ENCODE measurements at regions of chr6 and their contacts with region 1.

Region 1: GRCh38 chr6:30672445-30673253 is at the start of gene DHX16:
- DNase-seq: peak; percentile 98
- H3K4me3 ChIP-seq: peak within 1 kb of the TSS; percentile 81 to 95 (median 94)
- H3K27ac ChIP-seq: peak within 1 kb of the TSS; percentile 80 to 93 (median 84)
- H3K4me1 ChIP-seq: peaks cover 16 to 32% (median 23%) of the 10 kb centered on the region in 4 donors
- H3K27me3 ChIP-seq: no peaks in the 10 kb centered on the region
- CTCF ChIP-seq: peak; percentile 86 to 96 (median 94)
- EP300 ChIP-seq: no peak
- POLR2A ChIP-seq: no peak
- total RNA-seq, gene DHX16: 20.3 to 41.1 (median 31.1) TPM

Region 2: DNA sequence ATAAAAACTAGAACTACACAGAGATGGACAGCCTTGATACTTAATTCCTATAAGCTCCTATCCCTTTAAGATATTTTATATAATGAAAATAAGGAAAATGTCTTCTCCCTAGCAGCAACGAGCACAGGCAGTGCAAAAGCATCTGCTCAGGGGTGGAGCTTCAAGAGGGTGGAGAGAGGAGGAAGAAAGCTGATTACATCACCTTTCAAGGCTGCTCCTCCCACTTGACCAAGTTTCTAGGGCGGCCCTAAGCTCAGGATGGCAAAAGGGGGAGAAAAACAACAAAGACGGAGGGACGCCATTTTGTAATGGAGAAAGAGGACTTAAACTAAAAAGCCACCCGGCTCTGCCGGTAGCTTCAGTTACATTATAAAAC is 57.8 kb before region 1 on chr6:
- intact Hi-C with region 1: no loop called
- DNase-seq: peak; percentile 95
- H3K4me3 ChIP-seq: peak overlapping the region; percentile 68 to 91 (median 76)
- H3K27ac ChIP-seq: peak overlapping the region; percentile 90 to 98 (median 96)
- H3K4me1 ChIP-seq: peaks cover 59 to 68% (median 64%) of the 10 kb centered on the region in 4 donors
- H3K27me3 ChIP-seq: no peaks in the 10 kb centered on the region
- CTCF ChIP-seq: peak in 1 of 3 experiments; percentile 11
- EP300 ChIP-seq: no peak
- POLR2A ChIP-seq: no peak

Region 3: GRCh38 chr6:30626484-30627366 is 45.9 kb before region 1 on chr6 and contains the start of gene ATAT1:
- intact Hi-C with region 1: loop called (anchors 2 kb)
- DNase-seq: peak; percentile 98
- H3K4me3 ChIP-seq: peak within 1 kb of the TSS; percentile 52 to 66 (median 58)
- H3K27ac ChIP-seq: peak within 1 kb of the TSS; percentile 91
- H3K4me1 ChIP-seq: peaks cover 11 to 19% (median 16%) of the 10 kb centered on the region in 4 donors
- H3K27me3 ChIP-seq: no peaks in the 10 kb centered on the region
- CTCF ChIP-seq: peak; percentile 38 to 66 (median 47)
- EP300 ChIP-seq: peak; percentile 70
- POLR2A ChIP-seq: no peak
- total RNA-seq, gene ATAT1: 2.7 to 8.7 (median 5.1) TPM

Region 4: DNA sequence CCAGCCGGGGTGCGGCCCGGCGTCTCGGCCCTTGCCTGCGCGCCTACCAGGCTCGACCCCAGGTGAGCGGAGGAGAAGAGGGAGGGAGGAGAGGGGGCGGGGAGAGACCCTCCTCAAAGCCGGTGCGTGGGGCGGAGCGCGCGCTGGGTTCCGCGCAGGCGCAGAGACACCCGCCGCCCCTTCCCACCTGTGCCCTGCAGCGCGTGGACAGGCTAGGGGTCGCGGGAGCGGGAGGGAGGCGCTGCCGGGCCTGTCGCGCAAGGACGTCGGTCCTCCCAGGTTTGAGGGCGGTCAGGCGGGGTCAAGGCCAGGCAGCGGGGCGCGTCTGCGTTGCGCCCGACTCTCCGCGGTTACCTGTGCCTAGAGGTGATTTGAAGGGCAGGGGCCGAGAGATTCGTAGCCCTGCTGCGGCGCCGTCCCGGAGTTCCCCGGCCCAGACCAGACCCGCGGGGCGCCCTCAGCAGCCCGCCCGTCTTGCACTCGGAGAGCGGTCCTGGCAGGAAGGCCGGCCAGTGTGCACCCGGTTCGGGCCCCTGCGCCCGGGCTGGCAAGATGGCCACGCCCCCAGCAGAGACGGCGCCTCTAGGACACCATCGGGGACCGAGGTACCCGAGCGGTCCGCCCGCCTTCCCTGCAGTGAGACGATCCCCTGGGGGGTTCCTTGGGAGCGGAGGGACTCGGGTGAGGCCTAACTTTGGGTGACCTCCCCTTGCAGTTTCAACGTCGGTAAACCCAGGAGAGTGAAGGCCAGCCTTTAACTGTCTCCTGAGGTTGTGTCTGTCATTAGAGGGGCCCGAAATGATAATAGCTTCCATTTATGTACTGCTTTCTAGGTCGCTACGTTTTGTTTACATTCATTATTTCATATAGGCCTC is 25.2 kb before region 1 on chr6:
- intact Hi-C with region 1: loop called (anchors 1 kb)
- DNase-seq: no peak
- H3K4me3 ChIP-seq: peak overlapping the region; percentile 93 to 100 (median 100)
- H3K27ac ChIP-seq: peak overlapping the region; percentile 93 to 99 (median 98)
- H3K4me1 ChIP-seq: peaks cover 14 to 34% (median 25%) of the 10 kb centered on the region in 4 donors
- H3K27me3 ChIP-seq: no peaks in the 10 kb centered on the region
- CTCF ChIP-seq: no peak
- EP300 ChIP-seq: no peak
- POLR2A ChIP-seq: no peak